ENCODE measurements at regions of chr1 and their contacts with region 1.

Region 1: GRCh38 chr1:24114753-24115152 is 2.8 kb upstream of the MYOM3 start:
- DNase-seq: no peak
- H3K4me3 ChIP-seq: no peak overlapping the region
- H3K27ac ChIP-seq: no peak overlapping the region
- H3K4me1 ChIP-seq: peaks cover 14% of the 10 kb centered on the region
- H3K27me3 ChIP-seq: no peaks in the 10 kb centered on the region
- CTCF ChIP-seq: no peak

Region 2: GRCh38 chr1:24186993-24187805 is 72.4 kb after region 1 on chr1 and contains the start of gene IFNLR1:
- CTCF ChIA-PET with region 1: interaction called, 10 read pairs
- POLR2A ChIA-PET with region 1: no interaction called
- intact Hi-C with region 1: no loop called
- DNase-seq: peak; percentile 55 to 76
- H3K4me3 ChIP-seq: peak within 1 kb of the TSS; percentile 73
- H3K27ac ChIP-seq: peak within 1 kb of the TSS; percentile 37
- H3K4me1 ChIP-seq: peaks cover 21% of the 10 kb centered on the region
- H3K27me3 ChIP-seq: no peaks in the 10 kb centered on the region
- CTCF ChIP-seq: no peak
- total RNA-seq, gene IFNLR1: 5.5 and 8.1 TPM in 2 replicates